ENCODE measurements at regions of chr9 and their contacts with region 1.

Region 1: DNA sequence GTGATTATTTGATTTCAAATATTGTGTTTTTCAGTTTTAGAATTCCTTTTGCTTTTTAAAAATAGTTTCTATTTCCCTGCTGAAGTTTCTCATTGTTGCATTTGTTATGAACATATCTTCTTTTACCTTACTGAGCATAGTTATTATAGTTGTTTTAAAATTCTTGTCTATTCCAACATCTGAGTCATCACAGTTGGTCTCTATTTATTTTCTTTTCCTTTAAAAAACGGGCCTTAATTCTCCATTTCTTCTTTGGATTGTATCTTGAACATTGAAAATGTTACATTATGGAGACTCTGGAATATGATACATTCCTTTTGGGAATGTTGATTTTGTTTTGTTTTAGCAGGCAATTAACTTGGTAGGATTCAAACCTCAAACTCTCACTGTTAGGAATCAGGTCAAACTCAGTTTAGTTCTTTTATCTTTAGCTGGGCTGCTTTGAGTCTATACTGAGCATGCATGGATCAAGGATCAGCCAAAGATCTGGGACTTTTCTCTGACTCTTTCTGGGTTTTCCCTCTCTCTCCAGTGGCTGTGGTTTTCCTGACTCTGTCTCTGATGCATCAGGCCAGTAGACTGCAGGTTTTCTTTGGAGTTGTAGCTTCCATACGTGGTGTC is 70.3 kb downstream of the TEK start:
- DNase-seq: no peak
- ATAC-seq: no peak

Region 2: DNA sequence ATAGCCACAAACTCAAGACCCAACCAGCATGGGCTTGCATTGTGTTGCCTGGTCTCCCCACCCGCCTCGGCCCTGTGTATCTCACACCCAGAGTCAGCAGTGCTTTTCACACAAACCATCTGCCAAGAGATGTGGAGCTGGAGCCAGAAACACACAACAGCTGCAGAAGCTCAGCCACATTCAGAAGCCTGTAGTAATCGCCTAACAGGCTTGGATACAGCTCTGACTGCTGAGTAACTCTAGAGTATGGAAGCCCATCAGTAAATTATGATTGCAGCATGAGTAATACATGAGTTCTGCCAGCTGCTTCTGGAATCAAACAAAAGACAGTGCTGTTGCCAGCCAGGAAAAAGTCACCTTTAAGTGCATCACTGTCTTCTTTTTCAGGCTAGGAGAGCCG is 54.3 kb before region 1 on chr9:
- intact Hi-C with region 1: loop called (anchors 10 kb)
- DNase-seq: peak; percentile 73
- ATAC-seq: peak; percentile 97

Measured in Right ventricle myocardium superior (tissue), 1 donor.